Activated CD8-positive, alpha-beta T cell treated with anti-CD3 and anti-CD28 coated beads, Interleukin-2, amount 10 ng/mL, durations not matched to agents 7 days and 5 days (primary cell): ENCODE measurements at regions of chr6 and their contacts with region 1.

Region 1: DNA sequence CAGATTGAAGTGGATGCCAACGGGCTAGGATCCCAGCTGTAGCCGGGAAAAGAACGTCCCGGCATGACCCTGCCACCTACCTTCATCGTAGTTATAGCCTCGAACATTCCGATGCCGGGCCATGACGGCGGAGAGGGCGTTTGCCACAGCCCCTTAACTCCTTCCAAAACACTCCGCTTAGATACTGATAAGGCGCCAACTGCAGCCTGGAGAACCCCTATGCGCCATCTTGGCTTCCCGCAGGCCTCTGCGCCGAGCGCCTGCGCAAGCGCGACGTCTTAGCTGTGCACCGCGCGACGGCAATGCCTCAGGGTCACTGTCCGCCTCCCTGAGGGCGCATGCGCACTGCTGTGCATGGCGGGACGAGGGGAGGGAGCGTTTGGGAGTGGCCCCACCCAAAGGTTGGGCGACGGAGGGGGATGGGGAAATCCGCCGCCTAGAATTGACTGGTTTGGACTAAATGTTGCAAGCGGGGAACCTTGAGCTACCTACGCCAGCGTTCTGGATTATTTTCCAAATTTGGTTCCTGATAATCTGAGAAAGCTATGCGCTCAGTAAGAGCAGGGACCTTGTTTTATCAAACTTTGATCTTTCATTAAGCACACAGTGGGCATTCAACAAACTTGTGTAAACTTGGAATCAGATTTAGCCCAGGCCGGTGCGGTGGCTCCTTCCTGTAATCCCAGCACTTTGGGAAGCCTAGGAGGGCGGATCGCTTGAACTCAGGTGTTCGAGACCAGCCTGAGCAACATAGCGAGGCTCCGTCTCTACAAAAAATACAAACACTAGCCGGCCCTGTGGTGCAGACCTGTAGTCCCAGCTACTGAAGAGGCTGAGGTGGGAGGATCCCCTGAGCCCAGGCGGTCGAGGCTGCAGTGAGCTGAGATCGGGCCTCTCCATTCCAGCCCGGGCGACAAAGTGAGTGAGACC is at the start of gene HBS1L:
- DNase-seq: peak; percentile 98
- ATAC-seq: peak; percentile 99
- H3K4me3 Mint-ChIP-seq: peak within 1 kb of the TSS; percentile 97
- H3K27ac Mint-ChIP-seq: peak within 1 kb of the TSS; percentile 98
- H3K4me1 Mint-ChIP-seq: peaks cover 31% of the 10 kb centered on the region
- H3K27me3 Mint-ChIP-seq: no peaks in the 10 kb centered on the region
- total RNA-seq, gene HBS1L: 72.8 to 77.5 TPM

Region 2: GRCh38 chr6:134870677-134871498 is 183.9 kb before region 1 on chr6:
- CTCF ChIA-PET with region 1: no interaction called
- POLR2A ChIA-PET with region 1: no interaction called
- DNase-seq: no peak
- ATAC-seq: peak; percentile 46
- H3K4me3 Mint-ChIP-seq: no peak overlapping the region
- H3K27ac Mint-ChIP-seq: no peak overlapping the region
- H3K4me1 Mint-ChIP-seq: peaks cover 21% of the 10 kb centered on the region
- H3K27me3 Mint-ChIP-seq: no peaks in the 10 kb centered on the region

Region 3: GRCh38 chr6:135128268-135128914 is 73.6 kb after region 1 on chr6:
- CTCF ChIA-PET with region 1: interaction called, 5 read pairs
- POLR2A ChIA-PET with region 1: interaction called, 16 read pairs
- DNase-seq: peak; percentile 71
- ATAC-seq: peak; percentile 91
- H3K4me3 Mint-ChIP-seq: peak overlapping the region; percentile 49
- H3K27ac Mint-ChIP-seq: peak overlapping the region; percentile 90
- H3K4me1 Mint-ChIP-seq: peaks cover 40% of the 10 kb centered on the region
- H3K27me3 Mint-ChIP-seq: no peaks in the 10 kb centered on the region